HCT116 (cell line): ENCODE measurements at regions of chr16 and their contacts with region 1.

Region 1: DNA sequence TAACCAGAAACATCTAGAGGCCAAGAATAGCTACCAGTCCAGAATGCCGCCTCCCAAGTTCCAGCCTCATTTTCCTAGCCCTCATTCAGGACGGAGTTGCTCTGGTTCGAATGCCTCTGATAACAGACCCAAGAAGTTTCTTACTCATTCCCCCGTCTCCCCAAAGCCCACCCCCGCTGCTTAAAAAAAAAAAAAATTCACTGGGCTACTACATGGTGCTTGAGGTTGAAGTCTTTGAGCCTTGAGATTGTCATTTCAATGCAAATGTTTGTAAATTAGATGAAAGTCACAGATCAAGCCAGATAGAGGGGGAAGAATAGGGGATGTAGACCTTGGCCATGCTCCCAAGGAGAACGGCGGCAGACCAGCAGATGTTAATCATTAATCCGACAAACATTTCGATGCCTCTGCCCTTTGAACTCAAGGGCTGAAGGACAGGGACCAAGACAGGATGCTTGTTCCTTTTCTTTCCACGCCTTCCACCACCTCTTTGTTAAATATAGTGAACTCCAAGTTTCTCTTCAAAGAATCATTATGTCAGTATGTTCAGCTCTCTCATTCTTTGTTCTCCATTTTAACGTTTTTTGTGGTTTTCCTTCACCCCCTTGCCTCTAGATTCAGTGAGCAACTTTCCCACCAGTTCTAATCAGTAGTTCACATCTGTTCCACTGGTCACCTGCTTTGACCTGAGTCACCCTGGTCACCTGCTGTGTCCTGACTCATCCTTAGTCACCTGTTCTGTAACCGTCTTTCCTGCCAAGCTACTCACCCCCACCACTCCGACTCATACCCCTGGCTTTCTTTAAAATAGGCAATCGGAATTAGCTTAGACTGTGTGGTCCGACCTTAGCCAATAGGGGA is 190.3 kb downstream of the CPPED1 start:
- DNase-seq: peak; percentile 94
- ATAC-seq: peak; percentile 82
- H3K4me3 ChIP-seq: peak overlapping the region; percentile 6 to 40; a peak in 3 of 4 replicates
- H3K27ac ChIP-seq: peak overlapping the region; percentile 64
- H3K4me1 ChIP-seq: peaks cover 32 to 57% of the 10 kb centered on the region in 2 experiments
- H3K27me3 ChIP-seq: no peaks in the 10 kb centered on the region
- CTCF ChIP-seq: no peak
- POLR2A ChIP-seq: no peak
- RAD21 ChIP-seq: no peak

Region 2: GRCh38 chr16:12803203-12804097 is 190.1 kb after region 1 on chr16 and contains the start of gene CPPED1:
- CTCF ChIA-PET with region 1: no interaction called
- POLR2A ChIA-PET with region 1: no interaction called
- RAD21 ChIA-PET with region 1: no interaction called
- intact Hi-C with region 1: loop called (anchors 2 kb)
- DNase-seq: peak; percentile 83
- ATAC-seq: peak; percentile 91
- H3K4me3 ChIP-seq: peak within 1 kb of the TSS; percentile 93 to 97
- H3K27ac ChIP-seq: peak within 1 kb of the TSS; percentile 75
- H3K4me1 ChIP-seq: peaks cover 10 to 23% of the 10 kb centered on the region in 2 experiments; a peak in 3 of 4 replicates
- H3K27me3 ChIP-seq: no peaks in the 10 kb centered on the region
- CTCF ChIP-seq: no peak
- POLR2A ChIP-seq: peak; percentile 86
- RAD21 ChIP-seq: no peak
- total RNA-seq, gene CPPED1: 8.1 TPM